ENCODE measurements at regions of chr4 and their contacts with region 1.

Region 1: GRCh38 chr4:94534401-94535312 is 82.9 kb downstream of the PDLIM5 start:
- DNase-seq: peak; percentile 45 to 67
- H3K4me3 ChIP-seq: no peak overlapping the region
- H3K4me3 Mint-ChIP-seq: peak overlapping the region; percentile 68
- H3K27ac Mint-ChIP-seq: peak overlapping the region; percentile 74
- H3K4me1 ChIP-seq: peaks cover 70% of the 10 kb centered on the region
- H3K4me1 Mint-ChIP-seq: peaks cover 51% of the 10 kb centered on the region
- H3K27me3 ChIP-seq: no peaks in the 10 kb centered on the region
- H3K27me3 Mint-ChIP-seq: no peaks in the 10 kb centered on the region
- CTCF ChIP-seq: no peak

Region 2: DNA sequence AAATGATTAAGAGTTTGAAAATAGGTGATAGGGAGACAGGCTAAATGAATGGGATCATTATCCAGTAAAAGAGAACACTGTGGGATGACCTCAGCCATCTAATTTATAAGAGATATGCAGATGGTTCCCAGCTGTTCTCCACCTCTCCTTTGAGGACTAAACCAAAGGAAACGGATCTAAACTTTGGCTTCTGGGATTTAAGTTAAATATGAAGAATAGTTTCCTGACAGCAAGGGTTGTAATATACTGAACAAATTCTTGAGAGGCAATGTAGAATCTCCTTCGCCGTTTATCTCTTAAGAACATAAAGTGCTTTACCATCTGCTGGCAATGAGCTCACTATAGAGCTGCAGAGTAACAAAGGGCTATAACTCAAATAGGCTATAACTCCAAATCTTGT is 156.6 kb before region 1 on chr4:
- CTCF ChIA-PET with region 1: no interaction called
- POLR2A ChIA-PET with region 1: no interaction called
- intact Hi-C with region 1: no loop called
- DNase-seq: no peak
- H3K4me3 ChIP-seq: no peak overlapping the region
- H3K4me3 Mint-ChIP-seq: no peak overlapping the region
- H3K27ac Mint-ChIP-seq: no peak overlapping the region
- H3K4me1 ChIP-seq: 0 out of 2 replicates have a peak, but pooled peaks cover 3% of the 10 kb centered on the region
- H3K4me1 Mint-ChIP-seq: peaks cover 6% of the 10 kb centered on the region
- H3K27me3 ChIP-seq: no peaks in the 10 kb centered on the region
- H3K27me3 Mint-ChIP-seq: no peaks in the 10 kb centered on the region
- CTCF ChIP-seq: no peak

Region 3: DNA sequence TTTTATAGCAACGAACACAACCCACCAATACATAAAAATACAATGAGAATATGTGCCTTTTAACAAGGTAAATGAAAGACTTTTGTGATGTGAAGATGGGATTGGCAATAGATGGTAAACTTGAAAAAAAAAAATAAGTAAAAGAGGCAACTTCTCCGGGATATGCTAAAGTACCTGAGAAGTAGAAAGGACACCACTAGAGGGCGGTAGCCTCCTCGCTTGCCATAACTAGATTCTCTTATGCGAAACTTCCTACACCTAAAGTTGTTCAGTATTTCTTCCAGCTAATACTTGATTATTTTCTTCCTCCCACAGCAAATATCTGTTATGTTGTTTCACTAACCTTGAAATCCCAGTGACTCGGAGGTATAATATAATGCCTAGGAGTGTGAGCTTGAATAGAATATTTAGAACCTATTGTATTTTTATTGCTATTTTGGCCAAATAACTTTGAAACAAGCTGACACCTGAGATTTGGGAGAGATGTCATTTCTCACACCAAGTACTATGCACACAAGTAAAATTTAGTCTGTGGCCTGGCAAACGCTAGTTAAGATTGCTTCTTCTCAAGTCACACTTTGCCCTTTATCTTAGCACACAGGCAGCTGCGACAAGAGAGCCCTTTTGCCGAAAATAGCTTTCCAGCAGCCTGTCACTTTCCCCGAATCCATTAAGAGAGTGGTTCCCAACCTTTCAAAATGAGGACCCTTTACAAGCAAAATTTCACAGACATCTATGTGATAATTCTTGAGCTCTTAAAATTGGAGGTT is 127.8 kb before region 1 on chr4:
- CTCF ChIA-PET with region 1: no interaction called
- POLR2A ChIA-PET with region 1: no interaction called
- intact Hi-C with region 1: loop called (anchors 1 kb)
- DNase-seq: peak; percentile 65 to 75
- H3K4me3 ChIP-seq: no peak overlapping the region
- H3K4me3 Mint-ChIP-seq: no peak overlapping the region
- H3K27ac Mint-ChIP-seq: no peak overlapping the region
- H3K4me1 ChIP-seq: peaks cover 9% of the 10 kb centered on the region
- H3K4me1 Mint-ChIP-seq: peaks cover 7% of the 10 kb centered on the region
- H3K27me3 ChIP-seq: no peaks in the 10 kb centered on the region
- H3K27me3 Mint-ChIP-seq: no peaks in the 10 kb centered on the region
- CTCF ChIP-seq: peak; percentile 76 to 82

Region 4: GRCh38 chr4:94457692-94458106 is 77.0 kb before region 1 on chr4:
- CTCF ChIA-PET with region 1: no interaction called
- POLR2A ChIA-PET with region 1: interaction called, 7 read pairs
- intact Hi-C with region 1: loop called (anchors 2 kb)
- DNase-seq: no peak
- H3K4me3 ChIP-seq: no peak overlapping the region
- H3K4me3 Mint-ChIP-seq: peak overlapping the region; percentile 27
- H3K27ac Mint-ChIP-seq: no peak overlapping the region
- H3K4me1 ChIP-seq: peaks cover 51% of the 10 kb centered on the region
- H3K4me1 Mint-ChIP-seq: peaks cover 44% of the 10 kb centered on the region
- H3K27me3 ChIP-seq: no peaks in the 10 kb centered on the region
- H3K27me3 Mint-ChIP-seq: no peaks in the 10 kb centered on the region
- CTCF ChIP-seq: no peak

Region 5: GRCh38 chr4:94870146-94870545 is 335.5 kb after region 1 on chr4:
- CTCF ChIA-PET with region 1: no interaction called
- POLR2A ChIA-PET with region 1: no interaction called
- intact Hi-C with region 1: no loop called
- DNase-seq: no peak
- H3K4me3 ChIP-seq: no peak overlapping the region
- H3K4me3 Mint-ChIP-seq: no peak overlapping the region
- H3K27ac Mint-ChIP-seq: no peak overlapping the region
- H3K4me1 ChIP-seq: no peaks in the 10 kb centered on the region
- H3K4me1 Mint-ChIP-seq: no peaks in the 10 kb centered on the region
- H3K27me3 ChIP-seq: no peaks in the 10 kb centered on the region
- H3K27me3 Mint-ChIP-seq: no peaks in the 10 kb centered on the region
- CTCF ChIP-seq: no peak

Measured in Caco-2 (cell line).